ENCODE measurements at regions of chr11 and their contacts with region 1.

Region 1: GRCh38 chr11:63663809-63664208 is 7.4 kb downstream of the ATL3 start:
- DNase-seq: no peak
- H3K4me3 ChIP-seq: no peak overlapping the region
- H3K27ac ChIP-seq: peak overlapping the region; percentile 0
- H3K27me3 ChIP-seq: no peaks in the 10 kb centered on the region
- CTCF ChIP-seq: no peak

Region 2: GRCh38 chr11:63485777-63486176 is 178.0 kb before region 1 on chr11:
- CTCF ChIA-PET with region 1: no interaction called
- POLR2A ChIA-PET with region 1: no interaction called
- DNase-seq: no peak
- H3K4me3 ChIP-seq: no peak overlapping the region
- H3K27ac ChIP-seq: no peak overlapping the region
- H3K27me3 ChIP-seq: peaks cover 16% of the 10 kb centered on the region
- CTCF ChIP-seq: no peak

Region 3: DNA sequence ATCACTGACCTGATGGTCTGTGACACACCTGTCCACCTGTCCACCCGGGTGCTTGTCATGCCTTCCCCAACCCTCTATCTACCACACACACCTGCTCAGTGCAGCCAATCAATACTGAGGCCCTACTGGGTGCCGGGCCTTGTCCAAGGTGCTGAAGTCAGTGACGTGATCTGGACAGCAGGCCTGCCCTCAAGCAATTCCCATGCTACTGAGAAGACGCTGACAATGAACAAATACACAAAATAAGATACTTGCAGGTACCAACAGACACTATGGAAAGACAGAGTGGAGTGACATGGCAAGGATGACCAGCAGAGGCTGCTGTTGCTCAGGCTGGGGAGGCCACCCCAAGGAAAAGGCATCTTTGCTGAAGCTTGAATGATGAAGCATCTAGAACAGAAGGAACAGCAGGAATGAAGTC is 70.8 kb before region 1 on chr11:
- CTCF ChIA-PET with region 1: no interaction called
- POLR2A ChIA-PET with region 1: no interaction called
- DNase-seq: no peak
- H3K4me3 ChIP-seq: no peak overlapping the region
- H3K27ac ChIP-seq: no peak overlapping the region
- H3K27me3 ChIP-seq: no peaks in the 10 kb centered on the region
- CTCF ChIP-seq: peak; percentile 67

Region 4: GRCh38 chr11:63635762-63636465 is 27.9 kb before region 1 on chr11:
- CTCF ChIA-PET with region 1: interaction called, 12 read pairs
- POLR2A ChIA-PET with region 1: no interaction called
- DNase-seq: peak; percentile 27
- H3K4me3 ChIP-seq: no peak overlapping the region
- H3K27ac ChIP-seq: no peak overlapping the region
- H3K27me3 ChIP-seq: no peaks in the 10 kb centered on the region
- CTCF ChIP-seq: peak; percentile 89

Measured in AG04450 (cell line).